ENCODE measurements at regions of chr2 and their contacts with region 1.

Region 1: GRCh38 chr2:226984750-226985582 is 149.1 kb downstream of the RHBDD1 start:
- DNase-seq: peak in 3 of 9 experiments; percentile 14 to 53 (median 33)
- ATAC-seq: peak; percentile 77
- H3K4me3 ChIP-seq: no peak overlapping the region
- H3K4me3 Mint-ChIP-seq: no peak overlapping the region
- H3K27ac ChIP-seq: no peak overlapping the region
- H3K27ac Mint-ChIP-seq: peak overlapping the region; percentile 79
- H3K4me1 ChIP-seq: peaks cover 14% of the 10 kb centered on the region
- H3K4me1 Mint-ChIP-seq: peaks cover 21% of the 10 kb centered on the region
- H3K27me3 ChIP-seq: no peaks in the 10 kb centered on the region
- H3K27me3 Mint-ChIP-seq: no peaks in the 10 kb centered on the region
- CTCF ChIP-seq: peak; percentile 46

Region 2: DNA sequence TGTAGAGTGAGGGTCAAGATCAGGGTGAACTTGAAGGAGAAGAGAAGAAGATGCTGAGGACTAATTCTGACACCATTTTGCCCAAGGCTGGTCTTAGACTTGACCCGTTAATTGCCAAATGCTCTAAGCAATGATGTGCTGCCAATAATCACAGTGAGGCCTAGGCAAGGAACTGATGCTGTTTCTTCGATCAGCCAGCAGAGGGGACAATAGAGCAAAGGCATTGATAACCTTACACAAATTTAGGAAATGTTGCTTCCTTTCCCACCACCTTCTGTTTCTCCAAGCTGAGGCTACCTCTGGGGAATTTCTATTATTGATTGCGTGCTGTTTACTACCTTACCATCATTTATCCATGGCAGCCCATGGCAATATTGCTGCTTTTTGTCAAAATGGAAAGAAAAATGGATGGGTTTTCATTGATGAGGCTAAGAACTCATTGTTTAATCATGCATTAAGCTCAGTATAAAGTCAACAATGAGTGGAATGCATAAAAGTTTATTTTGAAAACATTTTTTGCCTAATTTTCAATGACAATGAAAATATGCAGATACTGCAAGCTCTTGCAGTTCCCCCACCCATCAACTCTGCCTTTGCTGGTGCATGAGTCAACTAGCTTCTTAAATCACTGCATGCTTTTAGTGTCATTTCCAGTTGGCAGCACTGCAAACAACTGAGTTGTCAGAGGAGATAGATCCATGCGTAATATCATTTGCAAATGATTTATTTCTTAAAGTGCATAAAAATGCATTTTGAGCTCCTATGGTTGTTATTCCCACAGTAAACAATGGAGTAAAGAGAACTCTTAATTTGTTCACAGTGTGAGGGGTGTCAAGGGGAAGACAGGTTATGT is 1701.9 kb before region 1 on chr2:
- CTCF ChIA-PET with region 1: no interaction called
- POLR2A ChIA-PET with region 1: no interaction called
- intact Hi-C with region 1: loop called in 1 of 2 experiments (anchors 5 kb)
- DNase-seq: peak in 4 of 9 experiments; percentile 15 to 50 (median 26)
- ATAC-seq: no peak
- H3K4me3 ChIP-seq: no peak overlapping the region
- H3K4me3 Mint-ChIP-seq: no peak overlapping the region
- H3K27ac ChIP-seq: no peak overlapping the region
- H3K27ac Mint-ChIP-seq: no peak overlapping the region
- H3K4me1 ChIP-seq: no peaks in the 10 kb centered on the region
- H3K4me1 Mint-ChIP-seq: no peaks in the 10 kb centered on the region
- H3K27me3 ChIP-seq: no peaks in the 10 kb centered on the region
- H3K27me3 Mint-ChIP-seq: no peaks in the 10 kb centered on the region
- CTCF ChIP-seq: peak; percentile 66

Region 3: DNA sequence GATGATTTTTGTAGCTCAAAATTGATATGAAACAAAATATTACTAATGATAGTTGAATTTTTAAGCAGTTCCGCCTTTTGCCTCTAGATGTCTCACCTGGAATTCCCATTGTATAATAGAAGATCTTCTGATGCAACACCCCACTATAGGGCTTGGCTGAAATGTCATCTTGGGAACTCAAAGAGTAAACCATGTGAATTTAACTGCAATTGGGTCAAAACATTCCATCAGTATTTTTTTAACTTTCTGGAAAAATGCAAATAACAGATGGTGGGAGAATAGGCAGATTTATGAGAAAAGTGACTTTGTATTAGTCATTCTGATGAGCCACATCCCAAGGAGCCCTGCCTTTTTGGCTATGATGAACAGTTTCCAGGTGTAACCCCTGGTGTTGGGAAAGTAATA is 1095.5 kb before region 1 on chr2:
- CTCF ChIA-PET with region 1: interaction called, 8 read pairs
- POLR2A ChIA-PET with region 1: no interaction called
- intact Hi-C with region 1: loop called (anchors 2 kb)
- DNase-seq: peak in 2 of 9 experiments; percentile 17 to 29
- ATAC-seq: no peak
- H3K4me3 ChIP-seq: no peak overlapping the region
- H3K4me3 Mint-ChIP-seq: no peak overlapping the region
- H3K27ac ChIP-seq: no peak overlapping the region
- H3K27ac Mint-ChIP-seq: no peak overlapping the region
- H3K4me1 ChIP-seq: no peaks in the 10 kb centered on the region
- H3K4me1 Mint-ChIP-seq: no peaks in the 10 kb centered on the region
- H3K27me3 ChIP-seq: no peaks in the 10 kb centered on the region
- H3K27me3 Mint-ChIP-seq: peaks cover 10% of the 10 kb centered on the region
- CTCF ChIP-seq: peak; percentile 61

Region 4: GRCh38 chr2:226813148-226813701 is 171.7 kb before region 1 on chr2:
- CTCF ChIA-PET with region 1: no interaction called
- POLR2A ChIA-PET with region 1: no interaction called
- intact Hi-C with region 1: loop called in 1 of 2 experiments (anchors 5 kb)
- DNase-seq: peak in 2 of 9 experiments; percentile 10 to 21
- ATAC-seq: peak; percentile 31
- H3K4me3 ChIP-seq: no peak overlapping the region
- H3K4me3 Mint-ChIP-seq: no peak overlapping the region
- H3K27ac ChIP-seq: no peak overlapping the region
- H3K27ac Mint-ChIP-seq: no peak overlapping the region
- H3K4me1 ChIP-seq: no peaks in the 10 kb centered on the region
- H3K4me1 Mint-ChIP-seq: no peaks in the 10 kb centered on the region
- H3K27me3 ChIP-seq: peaks cover 0 to 7% of the 10 kb centered on the region in 2 experiments
- H3K27me3 Mint-ChIP-seq: peaks cover 37% of the 10 kb centered on the region
- CTCF ChIP-seq: no peak

Region 5: GRCh38 chr2:226887940-226888339 is 97.0 kb before region 1 on chr2:
- CTCF ChIA-PET with region 1: no interaction called
- POLR2A ChIA-PET with region 1: no interaction called
- intact Hi-C with region 1: no loop called
- DNase-seq: no peak
- ATAC-seq: no peak
- H3K4me3 ChIP-seq: no peak overlapping the region
- H3K4me3 Mint-ChIP-seq: no peak overlapping the region
- H3K27ac ChIP-seq: no peak overlapping the region
- H3K27ac Mint-ChIP-seq: no peak overlapping the region
- H3K4me1 ChIP-seq: no peaks in the 10 kb centered on the region
- H3K4me1 Mint-ChIP-seq: no peaks in the 10 kb centered on the region
- H3K27me3 ChIP-seq: no peaks in the 10 kb centered on the region
- H3K27me3 Mint-ChIP-seq: no peaks in the 10 kb centered on the region
- CTCF ChIP-seq: no peak